H1 (cell line): ENCODE measurements at regions of chr10 and their contacts with region 1.

Region 1: GRCh38 chr10:96984541-96985131 is 152.5 kb downstream of the LCOR start:
- DNase-seq: no peak
- H3K4me3 ChIP-seq: peak overlapping the region in 2 of 4 experiments; percentile 10 to 20; a peak in 2 of 8 replicates
- H3K27ac ChIP-seq: 0 out of 2 replicates have a peak overlapping the region, but pooled peaks have one; percentile 31
- H3K4me1 ChIP-seq: peaks cover 0 to 10% (median under 1%) of the 10 kb centered on the region in 4 experiments; a peak in 5 of 7 replicates
- H3K27me3 ChIP-seq: no peaks in the 10 kb centered on the region
- CTCF ChIP-seq: no peak
- EP300 ChIP-seq: no peak
- POLR2A ChIP-seq: no peak
- RAD21 ChIP-seq: no peak

Region 2: DNA sequence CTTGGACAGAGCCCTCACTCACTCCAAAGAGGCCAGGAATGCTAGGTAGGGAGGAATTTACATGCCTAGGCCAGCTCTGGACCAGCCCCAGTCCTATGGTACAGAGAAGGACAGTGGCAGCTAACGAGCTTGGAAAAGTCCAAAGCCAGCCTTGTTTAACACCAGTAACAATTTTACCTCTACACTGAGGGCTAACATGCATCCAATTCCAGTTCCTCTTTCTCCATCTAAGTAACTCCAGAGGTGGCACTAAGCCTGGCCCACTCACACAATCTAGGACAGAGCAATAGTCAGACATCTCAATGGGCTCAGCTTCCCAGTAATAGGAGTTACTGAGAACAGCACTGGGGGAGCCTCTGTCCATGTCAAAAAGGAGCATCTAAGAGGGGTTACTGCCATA is 158.2 kb before region 1 on chr10:
- CTCF ChIA-PET with region 1: no interaction called
- POLR2A ChIA-PET with region 1: no interaction called
- DNase-seq: no peak
- H3K4me3 ChIP-seq: no peak overlapping the region
- H3K27ac ChIP-seq: no peak overlapping the region
- H3K4me1 ChIP-seq: no peaks in the 10 kb centered on the region; a peak in 2 of 7 replicates
- H3K27me3 ChIP-seq: no peaks in the 10 kb centered on the region; a peak in 1 of 7 replicates
- CTCF ChIP-seq: no peak
- EP300 ChIP-seq: no peak
- POLR2A ChIP-seq: no peak
- RAD21 ChIP-seq: no peak

Region 3: DNA sequence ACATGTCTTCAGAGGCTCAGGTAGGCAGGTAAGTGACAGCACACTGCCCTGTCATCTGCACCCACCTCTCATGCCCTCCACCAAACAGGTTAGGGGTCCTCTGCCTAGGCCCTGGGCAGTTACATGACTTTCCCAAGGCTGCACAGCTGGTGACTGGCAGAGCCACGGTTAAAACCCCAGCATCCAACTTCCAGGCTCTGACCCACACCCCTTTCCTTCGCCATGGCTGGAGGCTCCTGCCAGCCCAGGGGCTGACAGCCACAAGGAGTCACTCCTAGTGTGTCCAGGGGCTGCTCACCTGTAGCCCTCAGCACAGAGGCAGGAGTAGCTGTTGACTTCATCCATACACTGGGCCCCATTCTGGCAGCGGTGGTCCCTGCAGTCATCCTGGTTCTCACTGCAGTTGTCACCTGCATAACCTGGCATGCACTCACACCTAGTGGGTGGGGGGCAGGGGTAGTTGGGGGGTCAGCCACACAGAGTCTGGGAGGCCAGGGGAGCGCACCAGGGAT is 26.1 kb after region 1 on chr10:
- CTCF ChIA-PET with region 1: interaction called, 12 read pairs
- POLR2A ChIA-PET with region 1: no interaction called
- DNase-seq: peak in 1 of 2 experiments; percentile 32
- H3K4me3 ChIP-seq: no peak overlapping the region
- H3K27ac ChIP-seq: no peak overlapping the region
- H3K4me1 ChIP-seq: peaks cover 0 to 4% (median 1%) of the 10 kb centered on the region in 4 experiments; a peak in 4 of 7 replicates
- H3K27me3 ChIP-seq: no peaks in the 10 kb centered on the region
- CTCF ChIP-seq: no peak
- EP300 ChIP-seq: no peak
- POLR2A ChIP-seq: no peak
- RAD21 ChIP-seq: no peak

Region 4: GRCh38 chr10:97081621-97082235 is 97.1 kb after region 1 on chr10:
- CTCF ChIA-PET with region 1: no interaction called
- POLR2A ChIA-PET with region 1: no interaction called
- DNase-seq: peak; percentile 63 to 90
- H3K4me3 ChIP-seq: no peak overlapping the region
- H3K27ac ChIP-seq: no peak overlapping the region
- H3K4me1 ChIP-seq: peaks cover 0 to 24% (median 14%) of the 10 kb centered on the region in 4 experiments; a peak in 5 of 7 replicates
- H3K27me3 ChIP-seq: no peaks in the 10 kb centered on the region
- CTCF ChIP-seq: peak; percentile 96 to 99 (median 97)
- EP300 ChIP-seq: no peak
- POLR2A ChIP-seq: no peak
- RAD21 ChIP-seq: peak; percentile 66 to 73